ENCODE measurements at regions of chr9 and their contacts with region 1.

Region 1: DNA sequence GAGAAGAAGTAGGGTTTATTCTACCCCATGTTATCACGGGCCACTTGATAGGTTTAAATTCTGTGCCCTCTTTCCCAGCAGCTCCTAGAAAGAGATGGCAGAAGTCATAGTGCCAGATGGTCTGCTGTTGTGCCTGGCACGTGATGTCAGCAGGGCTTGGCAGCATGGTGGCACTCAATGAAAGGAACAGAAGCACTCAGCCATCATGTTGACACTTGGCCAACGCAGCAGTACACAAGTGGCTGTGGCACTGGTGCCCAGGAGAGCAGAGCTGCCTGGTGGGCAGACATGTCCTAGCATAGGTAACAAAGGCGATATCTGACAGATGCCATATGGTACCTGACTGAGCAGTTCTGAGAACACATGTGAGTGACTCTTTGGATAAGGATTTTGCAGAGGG is 796.4 kb upstream of the ACO1 start:
- DNase-seq: no peak
- ATAC-seq: no peak
- H3K4me3 ChIP-seq: no peak overlapping the region
- H3K27ac ChIP-seq: no peak overlapping the region
- H3K4me1 ChIP-seq: no peaks in the 10 kb centered on the region
- H3K27me3 ChIP-seq: no peaks in the 10 kb centered on the region
- CTCF ChIP-seq: no peak
- POLR2A ChIP-seq: no peak

Region 2: GRCh38 chr9:31520301-31521085 is 67.5 kb before region 1 on chr9:
- intact Hi-C with region 1: loop called in 1 of 10 experiments (anchors 10 kb)
- DNase-seq: no peak
- ATAC-seq: no peak
- H3K4me3 ChIP-seq: no peak overlapping the region
- H3K27ac ChIP-seq: no peak overlapping the region
- H3K4me1 ChIP-seq: no peaks in the 10 kb centered on the region
- H3K27me3 ChIP-seq: no peaks in the 10 kb centered on the region
- CTCF ChIP-seq: no peak
- POLR2A ChIP-seq: no peak

Measured in heart left ventricle (tissue), 16 donors.